ENCODE measurements at regions of chr11 and their contacts with region 1.

Region 1: GRCh38 chr11:118956094-118956846 is at the start of gene UPK2:
- DNase-seq: peak; percentile 86 to 95 (median 93)
- ATAC-seq: peak; percentile 97
- H3K4me3 ChIP-seq: no peak within 1 kb of the TSS
- H3K4me1 ChIP-seq: no peaks in the 10 kb centered on the region
- CTCF ChIP-seq: peak; percentile 90
- total RNA-seq, gene UPK2: not detected

Region 2: GRCh38 chr11:118689851-118690552 is 266.3 kb before region 1 on chr11:
- intact Hi-C with region 1: loop called (anchors 5 to 10 kb)
- DNase-seq: peak; percentile 93 to 96 (median 95)
- ATAC-seq: peak; percentile 95
- H3K4me3 ChIP-seq: no peak overlapping the region
- H3K4me1 ChIP-seq: peaks cover 18% of the 10 kb centered on the region
- CTCF ChIP-seq: peak; percentile 80

Region 3: GRCh38 chr11:118907051-118908042 is 48.9 kb before region 1 on chr11:
- intact Hi-C with region 1: no loop called
- DNase-seq: peak; percentile 85 to 95 (median 94)
- ATAC-seq: peak; percentile 80
- H3K4me3 ChIP-seq: no peak overlapping the region
- H3K4me1 ChIP-seq: peaks cover 40% of the 10 kb centered on the region
- CTCF ChIP-seq: peak; percentile 64

Measured in mucosa of descending colon (tissue), 3 donors.